Left colon (tissue), 2 donors: ENCODE measurements at regions of chrX and their contacts with region 1.

Region 1: DNA sequence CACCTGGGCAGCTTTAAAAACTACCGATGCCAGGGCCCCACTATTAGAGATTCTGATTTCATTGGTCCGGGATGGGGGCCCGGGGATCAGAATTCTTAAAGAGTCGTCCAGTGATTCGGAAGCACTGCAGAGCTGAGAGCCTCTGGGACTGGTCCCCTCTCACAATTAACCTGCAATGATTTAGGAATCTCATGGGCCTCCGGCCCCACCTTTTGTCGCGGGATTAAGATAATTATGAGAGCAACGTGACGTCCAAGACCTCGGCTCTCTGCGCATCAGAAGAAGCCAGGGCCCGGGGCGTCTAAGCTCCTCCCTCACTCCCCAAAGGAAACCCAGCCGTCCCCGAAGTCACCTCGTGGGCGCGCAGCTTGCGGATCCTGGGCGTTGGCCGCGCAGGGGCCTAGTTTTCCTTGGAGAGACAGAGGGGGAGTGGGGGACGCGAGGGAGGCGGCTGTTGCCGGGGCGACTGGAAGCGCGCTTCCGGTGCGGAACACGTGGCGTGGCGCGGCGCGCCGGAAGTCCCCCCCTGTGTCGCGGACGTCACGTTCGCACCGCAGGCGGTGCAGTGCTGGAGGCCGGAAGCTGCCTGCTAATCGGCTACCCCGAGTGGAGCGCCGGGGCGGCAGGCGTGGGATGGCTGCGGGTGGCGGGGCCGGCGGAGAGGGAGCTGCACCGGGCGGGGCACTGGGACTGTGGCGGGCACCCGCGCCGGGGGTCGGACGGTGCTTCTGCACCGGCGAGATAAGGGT is at the start of gene GEMIN8:
- DNase-seq: peak; percentile 89 to 91
- ATAC-seq: peak; percentile 96
- total RNA-seq, gene GEMIN8: 11.8 to 13.3 TPM

Region 2: DNA sequence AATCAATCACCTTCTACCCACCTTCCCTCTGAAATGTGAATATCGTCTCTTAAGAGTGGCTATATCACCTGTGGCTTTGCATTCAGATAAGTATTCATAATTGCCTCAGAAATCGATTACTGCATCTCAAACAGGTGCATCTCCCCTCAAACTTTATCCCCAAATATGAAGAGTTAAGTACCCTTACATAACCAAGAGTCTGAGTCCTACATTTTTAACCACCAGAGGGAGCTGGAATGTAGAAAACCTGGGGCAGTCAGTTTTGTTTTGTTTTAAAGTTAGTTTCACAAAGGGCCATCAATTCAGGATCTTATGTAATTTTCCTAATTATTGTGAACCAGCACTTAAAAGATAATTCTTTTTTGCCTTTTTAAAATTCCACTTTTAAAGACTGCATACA is 371.0 kb before region 1 on chrX:
- intact Hi-C with region 1: loop called in 1 of 2 experiments (anchors 2 kb)
- DNase-seq: no peak
- ATAC-seq: peak; percentile 48